IMR-90 (cell line): ENCODE measurements at regions of chr19 and their contacts with region 1.

Region 1: DNA sequence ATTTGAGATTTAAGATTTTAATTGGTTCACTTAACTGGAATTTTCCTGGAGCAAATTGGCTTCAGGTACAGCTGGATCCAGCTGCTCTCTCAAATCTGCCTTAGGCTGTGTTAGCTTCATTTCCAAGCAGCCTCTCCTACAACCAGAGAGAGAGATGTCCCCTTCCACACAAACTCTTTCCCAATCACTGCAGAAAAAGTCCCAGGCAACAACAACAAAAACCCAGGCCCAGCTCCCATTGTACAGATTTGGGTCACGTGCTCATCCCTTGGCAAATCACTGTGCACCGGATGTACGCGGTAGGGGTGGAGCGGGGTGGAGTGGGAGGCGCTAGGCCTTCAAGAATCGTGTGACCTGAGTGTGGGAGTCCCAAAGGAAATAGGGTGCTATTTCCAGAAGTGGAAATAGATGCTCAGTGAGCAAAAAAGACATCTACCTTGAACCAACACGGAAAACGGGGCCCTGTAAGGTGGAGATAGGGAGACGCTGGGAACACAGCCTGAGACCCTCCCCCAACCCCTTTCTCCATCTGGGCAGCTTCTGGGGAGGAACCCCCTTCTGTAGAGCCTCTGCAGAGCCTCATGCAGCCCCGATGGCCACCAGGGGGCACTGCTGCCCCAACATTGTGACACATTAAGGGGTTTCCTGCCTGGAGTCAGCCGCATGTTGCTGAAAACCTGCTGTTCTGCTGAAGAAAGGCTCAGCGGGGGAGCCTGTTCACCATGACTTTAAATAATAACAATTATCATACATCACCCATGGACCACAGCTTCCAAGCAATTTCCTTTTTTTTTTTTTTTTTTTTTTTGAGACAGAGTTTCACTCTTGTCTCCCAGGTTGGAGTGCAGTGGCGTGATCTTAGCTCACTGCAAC is 25.4 kb downstream of the HPN start:
- DNase-seq: peak; percentile 77
- ATAC-seq: peak; percentile 89
- H3K4me3 ChIP-seq: no peak overlapping the region
- H3K27ac ChIP-seq: no peak overlapping the region
- H3K4me1 ChIP-seq: peaks cover 4% of the 10 kb centered on the region
- H3K27me3 ChIP-seq: no peaks in the 10 kb centered on the region
- CTCF ChIP-seq: peak; percentile 89
- POLR2A ChIP-seq: no peak
- RAD21 ChIP-seq: peak; percentile 86

Region 2: DNA sequence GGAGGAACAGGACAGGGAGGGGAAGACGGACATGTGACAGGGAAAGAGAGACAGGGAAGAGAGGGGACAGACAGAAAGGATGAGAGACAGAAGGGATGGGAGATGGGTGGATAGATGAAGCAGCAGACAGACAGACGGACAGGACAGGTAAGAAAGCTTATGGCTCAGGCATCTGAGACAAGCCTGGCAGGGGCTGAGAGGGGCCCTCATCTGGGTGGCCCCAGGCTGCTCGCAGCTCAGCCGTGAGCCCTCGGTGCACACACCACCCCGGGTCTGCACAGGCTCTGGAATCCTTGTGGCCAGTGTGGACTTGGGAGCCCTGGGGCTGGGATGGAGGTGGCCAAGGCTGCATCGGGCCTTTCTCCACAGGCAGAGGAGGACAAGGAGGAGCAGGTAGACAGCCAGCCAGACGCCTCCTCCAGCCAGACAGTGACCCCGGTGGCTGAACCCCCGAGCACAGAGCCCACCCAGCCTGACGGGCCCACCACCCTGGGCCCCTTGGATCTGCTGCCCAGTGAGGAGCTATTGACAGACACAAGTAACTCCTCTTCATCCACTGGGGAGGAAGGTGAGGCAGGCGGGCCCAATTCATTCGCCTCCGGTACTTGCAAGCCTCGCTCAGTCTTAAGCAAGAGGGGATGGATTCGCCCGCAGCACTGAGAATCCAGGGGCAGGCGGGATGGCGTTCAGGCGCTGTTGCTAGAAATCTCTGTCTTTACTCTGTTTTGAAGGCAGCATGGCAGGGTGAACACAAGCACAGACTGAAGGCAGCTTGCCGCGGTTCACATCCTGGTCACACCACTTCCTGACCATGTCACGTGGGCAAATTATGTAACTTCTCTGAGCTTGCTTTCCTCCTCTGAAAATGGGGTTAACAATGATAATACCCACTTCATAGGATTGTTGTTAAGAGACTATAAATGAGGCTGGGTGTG is 52.8 kb before region 1 on chr19:
- CTCF ChIA-PET with region 1: no interaction called
- POLR2A ChIA-PET with region 1: no interaction called
- dilution Hi-C with region 1: no loop called
- in situ Hi-C with region 1: no loop called
- intact Hi-C with region 1: no loop called
- DNase-seq: no peak
- ATAC-seq: no peak
- H3K4me3 ChIP-seq: no peak overlapping the region
- H3K27ac ChIP-seq: no peak overlapping the region
- H3K4me1 ChIP-seq: no peaks in the 10 kb centered on the region
- H3K27me3 ChIP-seq: no peaks in the 10 kb centered on the region
- CTCF ChIP-seq: no peak
- POLR2A ChIP-seq: no peak
- RAD21 ChIP-seq: no peak

Region 3: DNA sequence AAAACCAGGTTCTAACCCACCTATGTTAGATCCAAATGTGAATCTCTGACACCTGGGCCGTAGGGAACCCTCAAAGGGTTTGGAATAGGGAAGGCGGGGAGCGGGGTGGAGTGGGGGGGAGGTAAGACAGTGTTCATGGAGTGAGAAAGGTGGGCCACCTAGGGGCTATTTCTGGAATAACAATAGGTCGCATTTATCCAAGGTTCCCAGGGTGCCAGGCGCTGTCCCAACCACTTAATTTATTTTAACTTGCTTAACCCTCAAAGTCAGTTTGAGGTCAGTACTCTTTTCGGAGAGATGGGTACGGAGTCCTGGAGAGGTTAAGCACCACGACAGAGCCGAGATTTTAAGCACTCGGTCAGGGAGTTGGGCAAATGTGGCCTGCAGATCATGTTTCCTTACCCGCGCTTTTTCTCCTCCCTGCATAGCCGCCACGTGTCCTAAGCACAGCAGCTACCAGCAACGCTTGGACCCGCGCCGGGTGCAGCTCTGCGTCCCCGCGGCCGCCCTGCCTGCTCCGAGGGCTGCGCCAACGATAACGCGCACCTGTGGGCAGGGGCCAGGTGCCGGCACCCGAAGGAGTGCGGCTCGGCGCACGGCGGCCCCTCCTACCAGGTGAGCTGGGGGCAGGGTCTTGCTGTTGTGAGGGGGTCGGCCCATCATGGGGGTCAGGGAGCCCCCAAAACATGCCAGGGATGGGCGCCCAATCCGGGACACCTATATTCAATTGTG is 23.7 kb after region 1 on chr19:
- CTCF ChIA-PET with region 1: interaction called, 8 read pairs
- POLR2A ChIA-PET with region 1: no interaction called
- dilution Hi-C with region 1: no loop called
- in situ Hi-C with region 1: no loop called
- intact Hi-C with region 1: loop called (anchors 1 kb)
- DNase-seq: peak; percentile 53
- ATAC-seq: peak; percentile 79
- H3K4me3 ChIP-seq: no peak overlapping the region
- H3K27ac ChIP-seq: no peak overlapping the region
- H3K4me1 ChIP-seq: peaks cover 3% of the 10 kb centered on the region
- H3K27me3 ChIP-seq: peaks cover 3% of the 10 kb centered on the region; the same call in 1 of the 2 replicates
- CTCF ChIP-seq: peak; percentile 66
- POLR2A ChIP-seq: no peak
- RAD21 ChIP-seq: peak; percentile 64

Region 4: DNA sequence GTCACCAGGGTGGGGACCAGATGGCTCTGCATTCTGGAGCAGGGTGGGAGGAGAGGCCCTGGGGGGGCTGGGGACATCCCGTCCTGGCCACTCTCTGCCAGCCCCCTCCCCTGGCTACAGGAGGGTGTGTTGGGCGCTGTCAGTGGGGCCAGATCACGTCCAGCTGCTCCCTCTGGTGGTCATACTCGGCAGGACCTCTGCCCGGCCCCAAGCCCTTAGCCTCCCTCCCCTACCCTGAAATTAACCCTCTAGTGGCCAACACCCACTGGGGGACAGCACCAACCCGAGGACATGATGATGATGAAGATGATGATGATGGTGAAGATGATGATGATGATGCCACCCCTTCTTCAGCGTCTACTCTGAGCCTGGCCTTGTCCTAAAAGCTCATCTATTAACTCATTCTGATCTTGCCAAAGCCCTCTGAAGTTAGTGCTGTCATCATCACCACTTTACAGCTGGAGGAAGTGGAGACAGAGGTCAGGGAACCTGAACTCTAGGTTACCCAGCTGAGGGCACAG is 68.5 kb after region 1 on chr19:
- CTCF ChIA-PET with region 1: interaction called, 18 read pairs
- POLR2A ChIA-PET with region 1: no interaction called
- dilution Hi-C with region 1: no loop called
- in situ Hi-C with region 1: loop called (anchors 5 kb)
- intact Hi-C with region 1: loop called (anchors 1 kb)
- DNase-seq: peak; percentile 55
- ATAC-seq: peak; percentile 89
- H3K4me3 ChIP-seq: no peak overlapping the region
- H3K27ac ChIP-seq: no peak overlapping the region
- H3K4me1 ChIP-seq: peaks cover 14% of the 10 kb centered on the region
- H3K27me3 ChIP-seq: peaks cover 14% of the 10 kb centered on the region; the same call in 1 of the 2 replicates
- CTCF ChIP-seq: peak; percentile 82
- POLR2A ChIP-seq: no peak
- RAD21 ChIP-seq: peak; percentile 67

Region 5: DNA sequence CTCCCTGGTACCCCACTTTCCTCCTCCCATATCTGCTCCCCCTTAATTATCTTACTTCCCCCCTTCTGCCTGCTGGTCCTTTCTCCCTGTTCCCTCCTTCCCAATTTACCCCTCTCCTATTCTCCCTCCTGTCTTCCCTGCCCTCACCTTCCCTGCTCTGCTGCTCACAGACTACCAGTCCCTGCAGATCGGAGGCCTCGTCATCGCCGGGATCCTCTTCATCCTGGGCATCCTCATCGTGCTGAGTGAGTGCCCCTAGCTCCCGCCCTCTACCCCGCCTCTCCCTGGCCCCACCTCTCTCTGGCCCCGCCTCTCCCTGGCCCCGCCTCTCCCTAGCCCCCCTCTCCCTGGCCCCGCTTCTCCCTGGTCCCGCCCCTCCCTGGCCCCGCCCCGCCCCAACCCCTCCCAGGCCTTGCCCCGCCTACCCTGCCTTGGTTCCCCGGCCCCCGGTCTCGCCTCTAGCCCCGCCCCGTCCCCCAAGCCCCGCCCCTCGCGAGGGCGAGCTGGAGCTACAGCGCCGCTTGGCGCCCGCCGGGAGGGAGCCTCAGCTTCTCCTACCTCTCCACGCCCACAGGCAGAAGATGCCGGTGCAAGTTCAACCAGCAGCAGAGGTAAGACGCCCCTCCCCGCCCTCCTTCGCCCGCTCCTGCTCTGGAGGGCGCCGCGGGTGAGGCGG is 74.2 kb after region 1 on chr19:
- CTCF ChIA-PET with region 1: interaction called, 18 read pairs
- POLR2A ChIA-PET with region 1: no interaction called
- dilution Hi-C with region 1: no loop called
- in situ Hi-C with region 1: loop called (anchors 5 kb)
- intact Hi-C with region 1: no loop called
- DNase-seq: peak; percentile 86
- ATAC-seq: peak; percentile 87
- H3K4me3 ChIP-seq: no peak overlapping the region
- H3K27ac ChIP-seq: no peak overlapping the region
- H3K4me1 ChIP-seq: peaks cover 18% of the 10 kb centered on the region
- H3K27me3 ChIP-seq: peaks cover 33% of the 10 kb centered on the region
- CTCF ChIP-seq: peak; percentile 55
- POLR2A ChIP-seq: no peak
- RAD21 ChIP-seq: peak; percentile 46

Region 6: DNA sequence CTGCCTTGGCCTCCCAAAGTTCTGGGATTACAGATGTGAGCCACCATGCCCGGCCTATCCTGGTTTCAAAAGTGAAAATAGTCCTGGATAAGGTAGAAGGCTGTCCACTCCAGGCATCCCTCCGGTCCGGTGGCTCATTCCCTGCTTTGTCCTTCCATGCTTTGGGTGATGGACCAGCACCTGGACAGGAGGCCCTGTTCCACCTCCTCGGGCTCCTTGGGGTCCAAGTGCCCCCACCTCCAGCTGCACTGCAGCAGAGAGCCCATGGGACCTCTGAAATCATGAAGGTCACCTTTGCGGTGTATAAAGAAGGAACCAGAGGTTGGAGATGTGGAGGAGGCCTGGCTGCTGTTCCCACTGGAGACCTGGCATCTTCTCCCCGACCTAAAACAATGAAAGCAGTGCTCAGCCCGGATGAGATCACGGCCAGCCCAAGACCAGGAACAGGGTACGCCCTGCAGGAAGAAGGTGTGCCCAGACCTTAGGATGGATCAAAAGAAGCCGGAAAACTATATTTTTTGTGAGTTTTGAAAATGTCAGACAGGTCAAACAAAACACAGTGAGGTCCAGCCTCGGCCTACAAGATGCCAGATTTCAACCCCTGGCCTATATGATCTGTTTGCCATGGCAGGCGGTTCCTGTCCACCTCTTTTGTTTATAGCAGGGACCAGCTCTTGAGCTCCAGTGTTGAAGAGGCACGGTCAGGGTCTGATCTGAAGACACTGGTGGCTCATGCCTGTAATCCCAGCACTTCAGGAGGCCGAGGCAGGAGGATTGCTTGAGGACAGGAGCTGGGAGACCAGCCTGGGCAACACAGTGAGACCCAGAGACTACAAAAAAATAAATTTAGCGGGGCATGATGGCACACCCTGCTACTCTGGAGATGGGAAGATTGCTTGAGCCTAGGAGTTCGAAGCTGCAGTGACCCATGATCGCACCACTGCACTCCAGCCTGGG is 187.7 kb after region 1 on chr19:
- CTCF ChIA-PET with region 1: no interaction called
- POLR2A ChIA-PET with region 1: no interaction called
- dilution Hi-C with region 1: no loop called
- in situ Hi-C with region 1: no loop called
- intact Hi-C with region 1: no loop called
- DNase-seq: no peak
- ATAC-seq: no peak
- H3K4me3 ChIP-seq: no peak overlapping the region
- H3K27ac ChIP-seq: no peak overlapping the region
- H3K4me1 ChIP-seq: no peaks in the 10 kb centered on the region
- H3K27me3 ChIP-seq: peaks cover 34% of the 10 kb centered on the region
- CTCF ChIP-seq: no peak
- POLR2A ChIP-seq: no peak
- RAD21 ChIP-seq: no peak

Region 7: DNA sequence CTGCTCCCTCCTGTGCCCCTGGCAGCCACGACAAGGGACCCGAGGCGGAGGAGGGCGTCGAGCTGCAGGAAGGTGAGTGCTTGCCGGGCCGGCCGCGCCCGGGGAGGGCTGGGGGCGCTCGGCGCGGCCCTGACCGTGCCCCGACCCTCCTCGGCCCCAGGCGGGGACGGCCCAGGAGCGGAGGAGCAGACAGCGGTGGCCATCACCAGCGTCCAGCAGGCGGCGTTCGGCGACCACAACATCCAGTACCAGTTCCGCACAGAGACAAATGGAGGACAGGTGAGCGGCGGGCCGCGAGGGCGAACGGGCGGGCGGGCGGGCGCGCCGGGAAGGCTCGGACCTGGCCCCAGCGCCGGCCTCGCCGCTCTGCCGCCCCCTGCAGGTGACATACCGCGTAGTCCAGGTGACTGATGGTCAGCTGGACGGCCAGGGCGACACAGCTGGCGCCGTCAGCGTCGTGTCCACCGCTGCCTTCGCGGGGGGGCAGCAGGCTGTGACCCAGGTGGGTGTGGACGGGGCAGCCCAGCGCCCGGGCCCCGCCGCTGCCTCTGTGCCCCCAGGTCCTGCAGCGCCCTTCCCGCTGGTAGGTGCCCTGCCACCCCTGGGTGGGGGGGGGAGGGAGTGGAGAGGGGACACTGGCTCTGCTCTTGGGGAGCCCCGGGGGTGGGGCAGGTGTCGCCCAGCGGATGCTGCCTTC is 202.6 kb after region 1 on chr19:
- CTCF ChIA-PET with region 1: no interaction called
- POLR2A ChIA-PET with region 1: no interaction called
- dilution Hi-C with region 1: no loop called
- in situ Hi-C with region 1: no loop called
- intact Hi-C with region 1: loop called (anchors 2 kb)
- DNase-seq: peak; percentile 75
- ATAC-seq: peak; percentile 62
- H3K4me3 ChIP-seq: peak overlapping the region; percentile 73
- H3K27ac ChIP-seq: peak overlapping the region; percentile 78
- H3K4me1 ChIP-seq: peaks cover 7% of the 10 kb centered on the region
- H3K27me3 ChIP-seq: no peaks in the 10 kb centered on the region
- CTCF ChIP-seq: peak; percentile 56
- POLR2A ChIP-seq: no peak
- RAD21 ChIP-seq: peak; percentile 48